ENCODE measurements at regions of chr11 and their contacts with region 1.

Region 1: GRCh38 chr11:17063171-17064002 is 14.1 kb downstream of the RPS13 start:
- DNase-seq: peak; percentile 60 to 88 (median 81)
- ATAC-seq: peak; percentile 94
- H3K4me3 ChIP-seq: no peak overlapping the region
- H3K4me1 ChIP-seq: no peaks in the 10 kb centered on the region
- CTCF ChIP-seq: peak; percentile 53

Region 2: DNA sequence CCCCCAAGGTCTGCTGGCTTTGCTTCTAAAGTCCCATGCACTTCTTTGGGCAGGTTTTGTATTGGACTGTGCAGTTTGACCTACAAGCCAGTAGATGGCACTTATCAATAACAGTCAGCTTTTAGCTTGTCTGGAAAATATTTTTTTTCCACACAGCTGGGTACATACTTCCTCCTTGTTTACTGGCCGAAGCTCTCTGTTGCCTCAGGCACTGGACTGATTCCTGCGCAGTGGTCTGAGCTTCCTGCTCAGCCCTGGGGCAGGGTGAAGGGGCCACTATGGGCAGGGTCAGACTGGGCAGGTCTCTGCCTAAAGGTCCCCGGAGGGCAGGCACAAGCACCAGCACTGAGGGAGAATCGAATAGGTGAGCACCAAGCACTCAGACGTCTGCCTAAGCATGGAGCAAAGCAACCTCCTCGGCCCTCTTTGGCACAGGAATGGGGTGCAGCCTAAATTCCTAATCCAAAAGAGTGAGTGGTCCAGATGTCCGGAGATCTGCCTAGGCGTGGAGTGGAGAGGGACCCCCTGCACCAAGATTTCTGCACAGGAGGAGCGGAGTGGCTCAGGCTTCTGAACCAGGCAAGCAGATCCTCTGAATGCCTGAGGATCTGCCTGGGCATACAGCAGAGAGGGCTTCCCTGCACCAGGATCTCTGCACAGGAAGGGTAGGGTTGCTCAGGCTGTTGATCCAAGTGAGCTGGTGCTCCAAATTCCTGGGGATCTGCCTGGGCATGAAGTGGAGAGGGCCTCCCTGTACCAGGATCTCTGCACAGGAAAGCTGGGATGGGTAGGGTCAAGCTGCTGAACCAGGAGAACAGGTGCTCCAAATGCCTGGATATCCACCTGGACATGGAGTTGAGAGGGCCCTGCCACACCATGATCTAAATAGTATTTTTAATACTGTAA is 430.8 kb before region 1 on chr11:
- intact Hi-C with region 1: no loop called
- DNase-seq: peak in 1 of 3 donors; percentile 20
- ATAC-seq: no peak
- H3K4me3 ChIP-seq: no peak overlapping the region
- H3K4me1 ChIP-seq: no peaks in the 10 kb centered on the region
- CTCF ChIP-seq: no peak

Region 3: DNA sequence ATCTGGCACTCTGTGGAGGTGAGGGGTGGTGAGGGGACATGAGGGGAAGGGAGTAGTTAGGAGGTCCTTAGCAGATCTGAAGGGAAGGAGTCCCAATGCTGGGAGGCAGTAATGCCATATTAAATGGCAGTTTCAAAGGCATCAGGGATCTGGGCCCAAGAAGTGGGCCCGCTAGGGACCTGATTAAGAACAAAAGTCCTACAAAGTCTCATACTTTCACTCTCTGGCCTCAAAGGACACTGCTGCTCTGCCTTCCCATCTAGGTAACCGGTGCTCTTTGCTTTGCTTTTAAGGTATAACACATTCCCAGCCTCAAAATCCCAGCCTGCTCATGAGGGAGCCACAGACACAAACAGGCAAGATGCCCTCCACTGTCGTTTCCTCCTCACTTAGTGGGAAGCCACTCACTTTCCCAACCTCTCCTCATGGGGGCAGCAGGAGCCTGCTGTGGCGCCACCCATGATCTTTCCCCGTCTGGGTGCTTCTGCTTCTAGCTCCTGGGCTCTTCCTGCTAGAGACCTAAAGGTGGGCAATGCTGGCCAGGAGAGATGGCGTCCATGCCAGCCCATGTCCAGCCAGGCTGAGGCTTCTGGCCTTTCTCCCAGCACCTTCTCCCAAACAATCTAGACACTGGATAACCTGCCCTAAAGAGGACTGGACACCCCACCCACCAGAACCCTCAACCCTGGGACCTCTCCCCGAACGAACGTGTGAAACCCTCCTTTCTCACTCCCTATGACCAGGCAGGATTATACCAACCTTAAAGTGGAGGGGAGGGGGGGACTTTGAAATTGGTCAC is 117.5 kb before region 1 on chr11:
- intact Hi-C with region 1: loop called in 1 of 2 experiments (anchors 5 kb)
- DNase-seq: peak in 2 of 3 donors; percentile 79 to 80
- ATAC-seq: peak; percentile 96
- H3K4me3 ChIP-seq: no peak overlapping the region
- H3K4me1 ChIP-seq: no peaks in the 10 kb centered on the region
- CTCF ChIP-seq: peak; percentile 59

Region 4: GRCh38 chr11:17154409-17155159 is 91.2 kb after region 1 on chr11:
- intact Hi-C with region 1: no loop called
- DNase-seq: no peak
- ATAC-seq: no peak
- H3K4me3 ChIP-seq: no peak overlapping the region
- H3K4me1 ChIP-seq: no peaks in the 10 kb centered on the region
- CTCF ChIP-seq: no peak

Region 5: GRCh38 chr11:17184882-17185587 is 121.6 kb after region 1 on chr11:
- intact Hi-C with region 1: no loop called
- DNase-seq: no peak
- ATAC-seq: no peak
- H3K4me3 ChIP-seq: no peak overlapping the region
- H3K4me1 ChIP-seq: no peaks in the 10 kb centered on the region
- CTCF ChIP-seq: no peak

Measured in mucosa of descending colon (tissue), 3 donors.